ENCODE measurements at regions of chr5 and their contacts with region 1.

Region 1: DNA sequence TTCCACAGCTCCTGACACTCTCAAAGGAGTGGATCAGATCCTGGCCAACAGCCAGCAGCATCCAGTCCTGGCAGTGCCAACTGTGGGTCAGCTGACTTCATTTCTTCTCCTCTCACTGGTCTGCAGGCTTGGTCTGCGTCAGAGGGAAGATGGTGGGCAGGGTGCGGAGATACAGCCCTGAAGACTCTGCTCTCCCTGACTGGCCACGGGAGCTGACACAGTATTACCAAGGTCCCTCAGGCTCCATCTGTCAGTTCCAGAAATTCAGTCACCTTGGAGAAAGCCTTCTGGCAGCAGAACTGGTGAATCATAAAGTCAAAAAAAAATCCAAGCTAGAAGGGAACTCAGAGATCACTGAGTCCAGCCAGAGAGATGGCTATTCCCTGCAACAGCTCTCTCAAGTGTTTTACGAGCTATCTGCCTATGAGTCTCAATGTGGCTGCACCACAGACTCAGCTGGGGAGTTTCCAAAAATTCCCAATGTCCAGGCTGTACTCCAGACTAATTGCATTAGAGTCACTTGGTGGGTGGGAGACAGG is 28.0 kb downstream of the C1QTNF2 start:
- DNase-seq: no peak
- ATAC-seq: no peak
- H3K4me3 ChIP-seq: no peak overlapping the region
- H3K27ac ChIP-seq: no peak overlapping the region
- H3K4me1 ChIP-seq: no peaks in the 10 kb centered on the region
- H3K27me3 ChIP-seq: peaks cover 0 to 3% of the 10 kb centered on the region in 2 experiments; a peak in 1 of 5 replicates
- CTCF ChIP-seq: no peak
- EP300 ChIP-seq: no peak
- POLR2A ChIP-seq: no peak
- RAD21 ChIP-seq: no peak

Region 2: GRCh38 chr5:160021831-160022446 is 320.5 kb before region 1 on chr5:
- CTCF ChIA-PET with region 1: interaction called, 6 read pairs
- POLR2A ChIA-PET with region 1: no interaction called
- in situ Hi-C with region 1: no loop called
- intact Hi-C with region 1: loop called (anchors 5 kb)
- DNase-seq: peak; percentile 61
- ATAC-seq: peak; percentile 94
- H3K4me3 ChIP-seq: no peak overlapping the region
- H3K27ac ChIP-seq: no peak overlapping the region
- H3K4me1 ChIP-seq: no peaks in the 10 kb centered on the region
- H3K27me3 ChIP-seq: no peaks in the 10 kb centered on the region
- CTCF ChIP-seq: peak; percentile 73
- EP300 ChIP-seq: no peak
- POLR2A ChIP-seq: no peak
- RAD21 ChIP-seq: peak; percentile 48

Region 3: GRCh38 chr5:160081495-160081894 is 261.0 kb before region 1 on chr5:
- CTCF ChIA-PET with region 1: interaction called, 4 read pairs
- POLR2A ChIA-PET with region 1: no interaction called
- in situ Hi-C with region 1: no loop called
- intact Hi-C with region 1: loop called (anchors 2 kb)
- DNase-seq: no peak
- ATAC-seq: no peak
- H3K4me3 ChIP-seq: no peak overlapping the region
- H3K27ac ChIP-seq: no peak overlapping the region
- H3K4me1 ChIP-seq: no peaks in the 10 kb centered on the region
- H3K27me3 ChIP-seq: no peaks in the 10 kb centered on the region
- CTCF ChIP-seq: no peak
- EP300 ChIP-seq: no peak
- POLR2A ChIP-seq: no peak
- RAD21 ChIP-seq: no peak

Region 4: DNA sequence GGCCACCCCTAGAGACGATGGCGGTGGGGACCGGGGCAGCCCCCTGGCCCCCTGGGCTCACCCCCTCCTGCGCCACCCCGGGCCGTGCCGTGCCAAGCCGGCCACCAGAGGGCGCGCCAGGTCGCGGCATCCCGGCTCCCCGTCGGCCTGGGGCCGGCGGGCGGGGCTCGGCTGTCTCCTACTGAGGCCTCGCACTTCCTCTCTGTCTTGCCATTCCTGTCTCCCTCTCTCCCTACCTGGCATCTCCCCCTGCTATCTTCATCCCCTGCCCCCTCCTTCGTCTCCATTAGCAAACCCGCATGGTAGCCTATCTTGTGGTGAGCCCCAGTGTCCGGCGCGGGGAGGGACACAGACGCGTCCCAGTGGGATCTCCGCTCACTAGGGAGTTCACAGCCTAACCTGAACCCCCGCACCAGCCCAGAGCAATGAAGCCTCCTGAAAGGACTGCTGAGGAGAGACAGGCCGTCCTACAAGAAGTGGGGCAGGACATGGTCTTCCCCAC is 143.0 kb before region 1 on chr5:
- CTCF ChIA-PET with region 1: interaction called, 46 read pairs
- POLR2A ChIA-PET with region 1: no interaction called
- in situ Hi-C with region 1: loop called (anchors 5 kb)
- intact Hi-C with region 1: loop called (anchors 1 kb)
- DNase-seq: no peak
- ATAC-seq: peak; percentile 98
- H3K4me3 ChIP-seq: peak overlapping the region in 2 of 3 experiments; percentile 39 to 50; a peak in 4 of 6 replicates
- H3K27ac ChIP-seq: no peak overlapping the region
- H3K4me1 ChIP-seq: peaks cover 13% of the 10 kb centered on the region; the same call in 1 of the 2 replicates
- H3K27me3 ChIP-seq: peaks cover 3 to 11% of the 10 kb centered on the region in 2 experiments; a peak in 3 of 5 replicates
- CTCF ChIP-seq: peak; percentile 83
- EP300 ChIP-seq: no peak
- POLR2A ChIP-seq: no peak
- RAD21 ChIP-seq: peak; percentile 94

Region 5: DNA sequence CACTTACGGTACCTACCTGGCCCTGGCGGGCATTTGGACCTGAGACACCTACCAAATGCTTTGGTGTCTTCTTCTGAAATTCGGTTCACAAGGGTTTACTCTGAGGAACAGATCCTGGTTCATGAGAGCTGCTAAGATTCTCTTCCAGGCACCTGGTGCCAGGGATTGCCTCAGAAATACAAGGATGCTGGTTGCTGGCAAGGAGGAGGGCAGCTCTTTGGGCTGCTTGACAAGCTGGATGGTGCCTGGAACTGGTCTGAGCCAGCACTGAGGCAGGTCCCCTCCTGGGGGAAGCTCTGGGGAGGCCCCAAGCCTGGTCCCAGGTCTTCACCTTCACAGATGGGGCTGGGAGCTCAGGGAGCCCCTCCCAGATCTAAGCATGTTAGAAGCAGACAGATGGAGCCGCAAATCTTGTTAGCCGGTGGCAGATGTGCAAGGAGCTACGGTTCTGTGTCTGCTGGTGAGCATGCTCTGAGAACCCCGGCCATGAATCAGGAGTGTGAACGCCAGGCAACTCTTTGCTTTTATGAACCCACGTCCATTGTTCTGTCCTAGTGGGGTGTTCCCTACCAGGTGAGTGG is 96.9 kb before region 1 on chr5:
- CTCF ChIA-PET with region 1: interaction called, 11 read pairs
- POLR2A ChIA-PET with region 1: no interaction called
- in situ Hi-C with region 1: no loop called
- intact Hi-C with region 1: loop called (anchors 1 kb)
- DNase-seq: no peak
- ATAC-seq: peak; percentile 21; the same call in 1 of the 3 replicates
- H3K4me3 ChIP-seq: no peak overlapping the region
- H3K27ac ChIP-seq: no peak overlapping the region
- H3K4me1 ChIP-seq: no peaks in the 10 kb centered on the region
- H3K27me3 ChIP-seq: no peaks in the 10 kb centered on the region; a peak in 1 of 5 replicates
- CTCF ChIP-seq: no peak
- EP300 ChIP-seq: no peak
- POLR2A ChIP-seq: no peak
- RAD21 ChIP-seq: no peak

Region 6: DNA sequence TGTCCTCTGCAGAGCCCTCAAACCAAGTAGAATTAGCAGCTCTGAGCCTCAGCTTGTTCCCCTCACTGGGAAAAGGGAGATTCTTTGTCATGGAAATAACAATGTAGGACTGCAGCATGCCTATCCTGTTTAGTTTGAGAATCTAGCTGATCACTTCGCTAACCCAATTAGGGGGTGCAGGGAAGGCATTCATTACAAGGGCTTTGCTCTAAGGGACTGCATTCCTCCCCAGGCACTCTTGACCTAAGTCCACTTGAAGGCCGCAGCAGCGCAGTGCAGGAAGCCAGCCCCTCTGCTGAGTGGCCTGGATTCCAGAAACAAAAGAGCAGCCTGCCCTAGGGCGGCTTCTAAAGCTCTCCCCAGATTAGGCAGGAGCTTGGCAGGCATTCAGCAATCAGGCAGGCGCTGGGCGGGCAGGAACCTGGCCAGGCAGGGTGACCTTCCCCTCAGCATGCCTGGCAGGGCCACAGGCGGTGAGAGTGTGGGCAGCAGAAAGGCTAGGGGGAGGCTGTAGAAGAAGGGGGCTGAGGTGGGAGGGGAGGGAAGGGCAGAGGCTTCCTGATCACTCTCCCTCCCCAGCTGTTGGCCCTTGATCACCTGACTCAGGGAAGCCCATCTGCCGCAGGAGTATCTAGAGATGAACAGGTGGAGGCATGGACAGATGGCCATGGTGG is 55.0 kb before region 1 on chr5:
- CTCF ChIA-PET with region 1: no interaction called
- POLR2A ChIA-PET with region 1: no interaction called
- in situ Hi-C with region 1: no loop called
- intact Hi-C with region 1: loop called (anchors 1 kb)
- DNase-seq: peak; percentile 62
- ATAC-seq: peak; percentile 98
- H3K4me3 ChIP-seq: peak overlapping the region in 1 of 3 experiments; percentile 20; a peak in 1 of 6 replicates
- H3K27ac ChIP-seq: peak overlapping the region; percentile 39
- H3K4me1 ChIP-seq: peaks cover 15% of the 10 kb centered on the region
- H3K27me3 ChIP-seq: no peaks in the 10 kb centered on the region
- CTCF ChIP-seq: no peak
- EP300 ChIP-seq: no peak
- POLR2A ChIP-seq: no peak
- RAD21 ChIP-seq: no peak

Region 7: DNA sequence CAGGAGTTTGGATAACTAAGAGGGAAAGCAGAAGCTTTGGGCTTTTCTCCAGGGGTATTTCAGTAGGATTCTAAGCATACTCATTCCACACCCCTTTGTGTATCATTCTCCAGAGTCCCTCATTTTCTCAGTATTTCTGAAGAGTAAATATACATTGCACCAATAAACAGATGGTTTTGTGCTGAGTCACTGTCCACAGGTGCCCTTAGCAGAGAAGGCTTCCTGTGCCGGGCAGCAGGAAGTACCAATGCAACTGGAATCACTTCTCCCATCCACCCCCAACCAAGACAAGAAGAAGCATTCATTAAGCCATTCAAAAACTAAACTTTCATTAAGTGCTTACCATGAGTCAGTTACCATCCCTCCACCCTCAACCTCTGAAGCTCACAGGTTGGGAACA is 26.5 kb before region 1 on chr5:
- CTCF ChIA-PET with region 1: no interaction called
- POLR2A ChIA-PET with region 1: interaction called, 3 read pairs
- in situ Hi-C with region 1: no loop called
- intact Hi-C with region 1: loop called (anchors 2 kb)
- DNase-seq: peak; percentile 85
- ATAC-seq: peak; percentile 74
- H3K4me3 ChIP-seq: no peak overlapping the region
- H3K27ac ChIP-seq: no peak overlapping the region
- H3K4me1 ChIP-seq: peaks cover 41% of the 10 kb centered on the region
- H3K27me3 ChIP-seq: peaks cover 0 to 3% of the 10 kb centered on the region in 2 experiments; a peak in 1 of 5 replicates
- CTCF ChIP-seq: no peak
- EP300 ChIP-seq: peak; percentile 48 to 73; a peak in 3 of 4 replicates
- POLR2A ChIP-seq: no peak
- RAD21 ChIP-seq: no peak